Calu3 (cell line): ENCODE measurements at regions of chr3 and their contacts with region 1.

Region 1: DNA sequence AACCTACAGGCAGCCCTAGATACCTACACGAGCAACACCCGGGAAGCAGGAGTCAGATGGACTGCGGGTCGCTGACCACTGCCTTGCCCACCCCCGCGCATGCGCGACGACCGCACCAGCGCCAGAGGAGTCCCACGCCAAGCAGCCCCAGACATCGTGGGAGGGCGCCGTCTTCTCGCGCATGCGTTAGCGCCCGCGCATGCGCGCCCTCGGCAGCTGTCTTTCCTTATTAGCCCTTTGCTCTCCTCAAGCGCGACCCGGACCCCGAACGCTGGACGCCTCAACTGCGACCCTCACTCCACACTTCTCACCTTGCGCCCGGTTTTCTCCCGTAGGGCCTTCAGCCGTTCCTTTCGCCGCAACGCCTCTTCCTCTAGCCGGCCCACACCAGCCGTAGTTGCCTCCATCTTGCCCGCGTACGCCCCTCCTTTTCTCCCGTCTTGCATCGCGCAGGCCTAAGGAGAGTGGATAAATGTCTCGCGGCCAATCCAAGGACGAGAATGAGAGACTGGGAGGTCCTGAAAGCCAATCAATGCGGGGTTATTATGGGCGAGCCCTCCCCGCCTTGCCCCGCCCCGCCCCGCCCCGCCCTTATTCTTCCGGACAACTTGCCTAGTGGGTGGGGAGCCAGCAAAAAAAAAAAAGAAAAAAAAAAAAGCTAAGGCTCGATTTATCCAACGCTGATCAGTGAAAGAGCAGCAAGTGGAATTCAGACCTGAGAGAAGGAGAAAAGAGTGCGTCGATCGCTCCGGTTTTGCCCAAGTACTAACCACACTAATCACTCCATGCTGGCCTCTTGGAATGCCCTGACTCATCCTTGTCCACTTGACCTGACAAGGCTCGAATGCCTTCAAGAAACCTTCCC is at the start of gene CCDC12:
- DNase-seq: peak; percentile 91
- H3K4me3 Mint-ChIP-seq: peak within 1 kb of the TSS; percentile 92
- H3K27ac Mint-ChIP-seq: peak within 1 kb of the TSS; percentile 99
- H3K4me1 Mint-ChIP-seq: peaks cover 37% of the 10 kb centered on the region
- H3K27me3 Mint-ChIP-seq: no peaks in the 10 kb centered on the region
- CTCF ChIP-seq: no peak
- total RNA-seq, gene CCDC12: 47.3 and 47.5 TPM in 2 replicates

Region 2: DNA sequence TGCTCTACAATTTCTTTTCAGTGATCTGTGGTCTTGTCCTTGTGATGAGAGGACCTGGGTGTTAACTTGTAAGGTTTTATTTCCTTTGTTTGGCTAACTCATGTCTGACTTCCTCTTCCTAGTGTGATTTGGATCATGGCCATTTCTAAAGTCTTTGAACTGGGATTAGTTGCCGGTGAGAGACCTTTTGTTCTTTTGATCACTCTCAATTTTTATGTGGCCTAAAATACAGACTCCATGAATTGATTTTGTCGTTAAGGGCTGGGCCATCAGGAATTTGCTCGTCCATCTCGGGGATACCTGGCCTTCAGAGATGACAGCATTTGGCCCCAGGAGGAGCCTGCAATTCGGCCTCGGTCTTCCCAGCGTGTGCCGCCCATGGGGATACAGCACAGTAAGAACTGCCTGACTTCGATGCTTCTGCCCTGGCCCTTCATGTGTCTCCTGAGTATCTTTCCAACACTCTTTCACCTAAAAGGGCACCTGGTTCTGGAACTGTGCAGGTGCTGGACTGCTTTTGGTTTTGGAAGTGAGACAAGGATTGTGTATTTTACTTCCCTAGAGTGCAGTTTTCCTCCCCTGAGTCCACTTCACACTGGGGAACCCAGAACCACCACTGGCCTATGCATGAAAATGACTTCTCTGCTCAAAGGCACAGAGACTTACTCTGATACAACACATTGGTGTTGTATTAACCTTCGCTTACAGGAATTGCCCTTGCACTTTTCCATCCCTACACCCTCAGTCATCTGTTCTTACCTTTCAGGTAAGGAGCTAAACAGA is 397.4 kb before region 1 on chr3:
- CTCF ChIA-PET with region 1: no interaction called
- intact Hi-C with region 1: no loop called
- DNase-seq: no peak
- H3K4me3 Mint-ChIP-seq: no peak overlapping the region
- H3K27ac Mint-ChIP-seq: no peak overlapping the region
- H3K4me1 Mint-ChIP-seq: peaks cover 7% of the 10 kb centered on the region
- H3K27me3 Mint-ChIP-seq: no peaks in the 10 kb centered on the region
- CTCF ChIP-seq: no peak

Region 3: GRCh38 chr3:46909535-46910442 is 66.8 kb before region 1 on chr3:
- CTCF ChIA-PET with region 1: interaction called, 11 read pairs
- intact Hi-C with region 1: no loop called
- DNase-seq: peak; percentile 86
- H3K4me3 Mint-ChIP-seq: no peak overlapping the region
- H3K27ac Mint-ChIP-seq: no peak overlapping the region
- H3K4me1 Mint-ChIP-seq: peaks cover 9% of the 10 kb centered on the region
- H3K27me3 Mint-ChIP-seq: no peaks in the 10 kb centered on the region
- CTCF ChIP-seq: peak; percentile 70

Region 4: GRCh38 chr3:46929324-46929723 is 47.2 kb before region 1 on chr3:
- CTCF ChIA-PET with region 1: interaction called, 12 read pairs
- intact Hi-C with region 1: loop called (anchors 5 kb)
- DNase-seq: no peak
- H3K4me3 Mint-ChIP-seq: peak overlapping the region; percentile 30
- H3K27ac Mint-ChIP-seq: peak overlapping the region; percentile 43
- H3K4me1 Mint-ChIP-seq: peaks cover 39% of the 10 kb centered on the region
- H3K27me3 Mint-ChIP-seq: no peaks in the 10 kb centered on the region
- CTCF ChIP-seq: no peak

Region 5: GRCh38 chr3:46935168-46935858 is 41.2 kb before region 1 on chr3:
- CTCF ChIA-PET with region 1: interaction called, 12 read pairs
- intact Hi-C with region 1: loop called (anchors 5 kb)
- DNase-seq: peak; percentile 88
- H3K4me3 Mint-ChIP-seq: no peak overlapping the region
- H3K27ac Mint-ChIP-seq: peak overlapping the region; percentile 64
- H3K4me1 Mint-ChIP-seq: peaks cover 61% of the 10 kb centered on the region
- H3K27me3 Mint-ChIP-seq: no peaks in the 10 kb centered on the region
- CTCF ChIP-seq: peak; percentile 53

Region 6: GRCh38 chr3:46943237-46944187 is 33.0 kb before region 1 on chr3:
- CTCF ChIA-PET with region 1: interaction called, 6 read pairs
- intact Hi-C with region 1: loop called (anchors 5 kb)
- DNase-seq: peak; percentile 57
- H3K4me3 Mint-ChIP-seq: peak overlapping the region; percentile 63
- H3K27ac Mint-ChIP-seq: peak overlapping the region; percentile 97
- H3K4me1 Mint-ChIP-seq: peaks cover 88% of the 10 kb centered on the region
- H3K27me3 Mint-ChIP-seq: no peaks in the 10 kb centered on the region
- CTCF ChIP-seq: no peak

Region 7: DNA sequence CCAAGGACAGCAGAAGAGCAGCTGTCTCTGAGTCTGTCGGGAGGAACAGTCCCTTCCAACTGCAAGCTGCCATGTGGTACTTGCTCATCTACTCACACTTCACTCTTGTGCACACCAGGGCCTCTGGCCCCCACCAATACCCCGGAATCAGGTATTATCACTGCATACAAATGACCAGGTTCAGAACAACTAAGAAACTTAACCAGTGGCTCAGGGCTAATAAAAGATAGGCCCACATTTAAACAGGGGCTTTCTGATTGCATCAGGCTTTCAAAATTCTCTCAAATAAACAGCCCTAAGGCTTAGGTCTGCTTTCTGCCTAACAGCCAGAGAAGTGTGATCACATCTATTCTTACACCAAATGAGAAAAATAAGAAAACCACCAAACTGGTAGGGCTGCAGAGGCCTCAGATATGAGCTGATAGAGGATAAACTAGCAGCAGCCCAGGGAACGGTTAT is 20.7 kb before region 1 on chr3:
- CTCF ChIA-PET with region 1: no interaction called
- intact Hi-C with region 1: no loop called
- DNase-seq: no peak
- H3K4me3 Mint-ChIP-seq: no peak overlapping the region
- H3K27ac Mint-ChIP-seq: no peak overlapping the region
- H3K4me1 Mint-ChIP-seq: peaks cover 88% of the 10 kb centered on the region
- H3K27me3 Mint-ChIP-seq: no peaks in the 10 kb centered on the region
- CTCF ChIP-seq: no peak